Calu3 (cell line): ENCODE measurements at regions of chr12 and their contacts with region 1.

Region 1: DNA sequence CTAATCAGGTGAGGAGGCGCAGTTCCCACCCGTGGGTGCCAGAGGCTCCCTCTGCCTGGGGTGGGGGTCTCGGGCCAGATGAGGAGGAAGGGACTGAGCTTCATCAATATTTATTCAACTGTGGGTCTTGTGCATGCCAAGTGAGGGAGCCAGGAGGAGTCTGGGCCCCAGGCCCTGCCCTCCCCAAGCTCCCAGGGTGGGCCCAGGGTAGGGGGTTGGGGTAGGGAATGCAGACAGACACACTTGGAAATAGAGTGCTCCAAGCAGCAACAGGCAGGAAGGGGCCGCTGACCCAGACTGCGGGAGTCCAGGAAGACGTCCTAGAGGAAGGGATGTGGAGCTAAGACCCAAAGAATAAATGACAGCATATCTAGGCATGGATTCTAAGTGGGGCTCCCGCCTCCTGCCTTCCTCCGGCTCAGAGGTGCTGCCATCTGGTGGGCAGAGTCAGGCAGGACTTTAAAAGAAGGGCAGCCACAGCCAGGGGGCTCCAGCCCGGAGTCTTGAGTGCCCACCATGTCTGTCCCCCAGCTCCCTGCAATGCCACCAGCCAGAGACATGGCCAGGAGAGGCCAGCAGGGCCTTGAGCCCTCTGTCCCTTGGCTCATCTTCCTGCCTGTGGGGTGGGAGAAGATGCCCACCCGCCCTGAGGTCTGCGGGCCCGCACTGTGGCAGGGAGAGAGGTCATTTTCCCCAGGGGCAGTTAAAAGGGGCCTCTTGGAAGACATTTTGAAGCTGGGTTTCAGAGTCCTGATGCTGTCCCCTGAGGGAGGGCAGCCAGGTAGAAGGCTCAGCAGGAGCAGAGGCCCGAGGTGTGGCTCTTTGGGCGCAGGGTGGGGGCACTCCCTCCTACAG is 70.1 kb downstream of the PHETA1 start:
- DNase-seq: peak; percentile 75
- H3K4me3 Mint-ChIP-seq: no peak overlapping the region
- H3K27ac Mint-ChIP-seq: no peak overlapping the region
- H3K4me1 Mint-ChIP-seq: no peaks in the 10 kb centered on the region
- H3K27me3 Mint-ChIP-seq: peaks cover 45% of the 10 kb centered on the region
- CTCF ChIP-seq: peak; percentile 78

Region 2: GRCh38 chr12:110893956-110894355 is 404.9 kb before region 1 on chr12:
- CTCF ChIA-PET with region 1: no interaction called
- intact Hi-C with region 1: loop called (anchors 2 kb)
- DNase-seq: no peak
- H3K4me3 Mint-ChIP-seq: no peak overlapping the region
- H3K27ac Mint-ChIP-seq: no peak overlapping the region
- H3K4me1 Mint-ChIP-seq: no peaks in the 10 kb centered on the region
- H3K27me3 Mint-ChIP-seq: peaks cover 65% of the 10 kb centered on the region
- CTCF ChIP-seq: no peak

Region 3: DNA sequence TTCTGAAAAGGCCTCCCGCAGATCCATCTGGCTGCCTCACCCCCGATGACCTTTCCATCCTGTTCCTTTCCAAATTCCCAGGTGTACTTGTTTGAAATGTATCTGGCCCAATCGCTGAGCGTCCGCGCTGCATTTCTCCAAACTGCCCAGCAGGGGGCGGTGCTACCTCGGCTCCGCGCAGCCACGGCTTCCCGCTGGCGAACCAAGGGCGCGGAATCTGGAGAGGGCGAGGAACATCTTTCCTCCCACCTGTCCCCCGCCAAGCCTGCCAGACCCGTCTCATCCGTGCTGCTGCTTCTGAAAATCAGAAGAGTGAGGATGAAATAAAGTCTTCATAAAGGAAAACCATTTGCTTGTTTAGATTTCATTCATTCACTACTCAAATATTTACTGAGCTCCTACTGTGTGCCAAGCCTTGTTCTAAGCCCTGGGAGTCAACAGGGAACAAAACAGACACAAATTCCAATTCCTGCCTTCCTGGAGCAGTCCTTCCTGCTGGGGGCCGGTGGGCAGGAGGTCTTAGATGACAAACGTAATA is 361.6 kb before region 1 on chr12:
- CTCF ChIA-PET with region 1: interaction called, 4 read pairs
- intact Hi-C with region 1: loop called (anchors 2 kb)
- DNase-seq: peak; percentile 67
- H3K4me3 Mint-ChIP-seq: no peak overlapping the region
- H3K27ac Mint-ChIP-seq: no peak overlapping the region
- H3K4me1 Mint-ChIP-seq: peaks cover 10% of the 10 kb centered on the region
- H3K27me3 Mint-ChIP-seq: peaks cover 37% of the 10 kb centered on the region
- CTCF ChIP-seq: peak; percentile 96

Region 4: GRCh38 chr12:110966081-110966760 is 332.6 kb before region 1 on chr12:
- CTCF ChIA-PET with region 1: no interaction called
- intact Hi-C with region 1: no loop called
- DNase-seq: no peak
- H3K4me3 Mint-ChIP-seq: no peak overlapping the region
- H3K27ac Mint-ChIP-seq: no peak overlapping the region
- H3K4me1 Mint-ChIP-seq: no peaks in the 10 kb centered on the region
- H3K27me3 Mint-ChIP-seq: peaks cover 100% of the 10 kb centered on the region
- CTCF ChIP-seq: no peak

Region 5: DNA sequence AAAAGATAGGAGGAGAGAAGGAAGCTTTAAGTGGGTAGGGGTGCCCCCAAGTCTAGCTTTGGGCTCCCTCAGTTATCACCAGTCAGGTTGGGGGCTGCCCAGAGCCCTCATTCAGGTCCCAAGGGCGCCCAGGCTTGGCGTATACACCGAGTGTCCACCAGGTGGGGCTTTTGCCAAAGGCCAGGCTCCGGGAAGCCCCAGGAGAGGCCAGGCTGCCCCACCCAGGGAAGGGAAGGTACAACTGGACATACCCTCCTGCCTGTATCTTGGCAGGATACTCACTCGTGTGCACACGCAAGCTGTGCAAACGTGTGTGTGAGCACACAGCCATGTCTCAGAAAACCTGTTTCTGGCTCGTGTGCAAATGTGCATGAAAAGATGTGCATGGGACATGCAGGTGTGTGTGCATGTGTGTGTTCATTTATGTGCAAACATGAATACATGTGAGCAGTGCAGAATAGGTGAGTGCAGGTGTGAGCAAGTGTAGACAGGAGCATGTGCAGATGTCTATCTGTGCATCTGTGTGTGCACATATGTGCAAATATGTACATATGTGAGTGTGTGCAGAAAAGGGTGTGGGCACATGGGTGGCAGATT is 274.5 kb before region 1 on chr12:
- CTCF ChIA-PET with region 1: interaction called, 4 read pairs
- intact Hi-C with region 1: loop called (anchors 1 kb)
- DNase-seq: peak; percentile 81
- H3K4me3 Mint-ChIP-seq: no peak overlapping the region
- H3K27ac Mint-ChIP-seq: no peak overlapping the region
- H3K4me1 Mint-ChIP-seq: peaks cover 7% of the 10 kb centered on the region
- H3K27me3 Mint-ChIP-seq: peaks cover 100% of the 10 kb centered on the region
- CTCF ChIP-seq: peak; percentile 88

Region 6: GRCh38 chr12:111330800-111331752 is 32.3 kb after region 1 on chr12:
- CTCF ChIA-PET with region 1: interaction called, 13 read pairs
- intact Hi-C with region 1: no loop called
- DNase-seq: peak; percentile 33
- H3K4me3 Mint-ChIP-seq: no peak overlapping the region
- H3K27ac Mint-ChIP-seq: no peak overlapping the region
- H3K4me1 Mint-ChIP-seq: no peaks in the 10 kb centered on the region
- H3K27me3 Mint-ChIP-seq: peaks cover 51% of the 10 kb centered on the region
- CTCF ChIP-seq: peak; percentile 55